Dendritic cell treated with granulocyte-macrophage colony-stimulating factor and Interleukin-4, amounts not matched to agents 40 ng/mL and 50 ng/mL, for 4 days (primary cell): ENCODE measurements at regions of chr17 and their contacts with region 1.

Region 1: GRCh38 chr17:72985881-72986720 is 106.4 kb downstream of the SLC39A11 start:
- H3K4me3 Mint-ChIP-seq: no peak overlapping the region
- H3K27ac Mint-ChIP-seq: no peak overlapping the region
- H3K4me1 Mint-ChIP-seq: peaks cover 6% of the 10 kb centered on the region
- H3K27me3 Mint-ChIP-seq: no peaks in the 10 kb centered on the region

Region 2: DNA sequence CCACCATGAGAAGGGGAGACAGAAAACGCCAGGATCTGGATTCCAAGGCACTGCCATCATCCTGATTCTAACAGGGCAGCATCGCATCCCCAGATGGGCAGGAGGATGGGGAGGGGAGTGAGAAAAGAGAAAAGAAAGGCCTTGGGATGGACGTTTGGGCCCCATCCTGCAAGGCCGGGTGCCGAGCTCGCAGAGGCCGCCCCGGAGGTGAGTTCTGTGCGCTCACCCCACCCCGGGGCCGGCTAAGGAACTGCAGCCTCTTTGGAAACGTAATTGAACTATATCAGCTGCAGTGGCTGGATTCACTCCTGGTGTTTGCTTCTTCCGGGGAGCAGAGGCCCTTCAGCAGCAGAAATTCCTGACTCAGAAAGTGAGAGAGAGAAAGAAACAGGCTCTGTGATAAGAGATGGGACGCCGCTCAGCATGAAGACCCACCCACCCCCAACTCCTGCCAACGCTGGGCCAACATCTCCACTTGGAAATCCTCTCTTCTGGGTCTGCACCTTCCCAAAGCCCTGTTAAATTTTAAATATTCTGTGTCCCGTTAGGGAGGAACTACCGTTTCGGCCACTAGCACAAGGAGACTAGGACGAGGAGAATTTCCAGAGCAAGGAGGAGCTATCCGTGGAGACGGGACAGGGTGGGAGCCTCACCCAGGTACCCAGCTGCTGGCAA is 170.2 kb after region 1 on chr17:
- intact Hi-C with region 1: loop called (anchors 1 kb)
- H3K4me3 Mint-ChIP-seq: no peak overlapping the region
- H3K27ac Mint-ChIP-seq: no peak overlapping the region
- H3K4me1 Mint-ChIP-seq: peaks cover 19% of the 10 kb centered on the region
- H3K27me3 Mint-ChIP-seq: peaks cover 25% of the 10 kb centered on the region